Activated CD8-positive, alpha-beta memory T cell treated with anti-CD3 and anti-CD28 coated beads, Interleukin-2, amount 10 ng/mL, durations not matched to agents 7 days and 5 days (primary cell): ENCODE measurements at regions of chr17 and their contacts with region 1.

Region 1: DNA sequence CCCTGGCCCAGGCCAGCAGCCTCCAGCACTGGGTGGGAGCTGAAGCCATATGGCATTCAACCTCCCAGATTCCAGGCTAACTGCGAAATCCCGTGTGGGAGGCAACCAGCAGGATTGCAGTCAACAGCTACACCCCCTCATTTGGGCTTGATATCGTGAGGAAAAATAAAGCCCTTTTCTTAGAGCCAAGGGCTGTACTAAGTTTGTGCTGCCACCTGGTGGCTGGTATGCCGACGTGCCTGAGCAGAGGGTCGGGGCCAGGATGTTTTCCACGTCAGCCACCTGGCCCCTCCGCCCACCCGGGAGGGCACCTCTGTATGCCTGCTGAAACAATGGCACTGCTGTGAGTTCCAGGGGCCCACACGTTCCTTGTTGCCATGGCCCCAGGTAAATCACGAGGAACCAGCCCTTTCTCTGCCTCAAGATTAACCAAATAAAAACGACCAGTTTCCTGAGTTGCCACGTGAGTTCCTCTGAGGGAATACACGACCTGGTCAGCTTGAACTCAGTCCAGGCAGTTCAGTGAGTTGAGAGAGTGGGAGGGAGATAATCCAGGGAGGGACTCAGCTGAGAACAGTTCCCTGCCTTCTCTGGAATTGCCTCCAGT is 9.0 kb downstream of the TMEM98 start:
- DNase-seq: peak; percentile 72
- ATAC-seq: peak; percentile 86
- H3K4me3 Mint-ChIP-seq: peak overlapping the region; percentile 37
- H3K27ac Mint-ChIP-seq: no peak overlapping the region
- H3K4me1 Mint-ChIP-seq: peaks cover 7% of the 10 kb centered on the region
- H3K27me3 Mint-ChIP-seq: peaks cover 39% of the 10 kb centered on the region

Region 2: GRCh38 chr17:32742681-32743538 is 194.1 kb before region 1 on chr17:
- CTCF ChIA-PET with region 1: no interaction called
- DNase-seq: no peak
- ATAC-seq: no peak
- H3K4me3 Mint-ChIP-seq: no peak overlapping the region
- H3K27ac Mint-ChIP-seq: no peak overlapping the region
- H3K4me1 Mint-ChIP-seq: no peaks in the 10 kb centered on the region
- H3K27me3 Mint-ChIP-seq: no peaks in the 10 kb centered on the region

Region 3: DNA sequence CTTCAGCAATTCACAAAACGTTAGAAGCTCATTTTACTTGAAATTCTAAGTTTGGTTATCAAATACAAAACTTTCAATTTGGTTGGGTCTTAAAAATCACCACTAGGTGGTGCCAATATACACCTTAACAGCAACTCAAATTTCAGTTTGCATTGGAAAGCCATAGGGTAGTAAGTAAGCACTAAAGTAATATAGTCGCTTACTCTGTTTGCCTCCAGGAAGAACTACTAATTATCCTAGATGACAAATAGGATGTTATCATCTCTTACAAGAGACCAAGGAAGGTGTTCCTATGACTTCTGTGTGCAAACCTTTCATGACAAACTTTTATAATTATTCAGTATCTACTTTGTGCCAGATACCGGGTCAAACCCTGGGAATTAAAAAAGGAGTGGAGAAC is 153.4 kb before region 1 on chr17:
- CTCF ChIA-PET with region 1: interaction called, 36 read pairs
- DNase-seq: no peak
- ATAC-seq: peak; percentile 47
- H3K4me3 Mint-ChIP-seq: no peak overlapping the region
- H3K27ac Mint-ChIP-seq: no peak overlapping the region
- H3K4me1 Mint-ChIP-seq: peaks cover 2% of the 10 kb centered on the region
- H3K27me3 Mint-ChIP-seq: no peaks in the 10 kb centered on the region

Region 4: GRCh38 chr17:32909787-32910369 is 27.1 kb before region 1 on chr17:
- CTCF ChIA-PET with region 1: interaction called, 31 read pairs
- DNase-seq: peak; percentile 87
- ATAC-seq: peak; percentile 84
- H3K4me3 Mint-ChIP-seq: no peak overlapping the region
- H3K27ac Mint-ChIP-seq: peak overlapping the region; percentile 26
- H3K4me1 Mint-ChIP-seq: peaks cover 37% of the 10 kb centered on the region
- H3K27me3 Mint-ChIP-seq: peaks cover 7% of the 10 kb centered on the region

Region 5: DNA sequence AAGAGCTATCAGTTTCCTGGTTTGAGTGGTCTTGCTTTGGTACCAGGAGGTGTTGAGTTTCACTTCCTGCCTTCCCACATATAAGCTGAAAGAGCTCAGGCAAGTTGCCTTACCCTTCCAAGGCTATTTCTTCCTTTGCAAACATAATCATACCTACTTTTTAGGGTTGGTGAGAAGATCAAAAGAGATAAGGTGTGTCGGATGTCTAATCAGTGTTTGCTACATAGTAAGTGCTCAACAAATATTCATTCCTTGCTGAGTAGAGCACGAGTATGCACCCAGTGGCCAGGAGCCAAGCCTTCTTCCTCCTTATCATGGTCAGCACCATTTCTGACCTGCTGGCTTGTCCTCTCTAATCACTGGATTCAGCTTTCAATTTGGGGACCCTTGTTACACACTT is 21.8 kb before region 1 on chr17:
- CTCF ChIA-PET with region 1: interaction called, 31 read pairs
- DNase-seq: no peak
- ATAC-seq: no peak
- H3K4me3 Mint-ChIP-seq: peak overlapping the region; percentile 6
- H3K27ac Mint-ChIP-seq: peak overlapping the region; percentile 68
- H3K4me1 Mint-ChIP-seq: peaks cover 51% of the 10 kb centered on the region
- H3K27me3 Mint-ChIP-seq: peaks cover 2% of the 10 kb centered on the region

Region 6: GRCh38 chr17:32997753-32998632 is 61.0 kb after region 1 on chr17:
- CTCF ChIA-PET with region 1: interaction called, 14 read pairs
- DNase-seq: peak; percentile 81
- ATAC-seq: peak; percentile 81
- H3K4me3 Mint-ChIP-seq: no peak overlapping the region
- H3K27ac Mint-ChIP-seq: no peak overlapping the region
- H3K4me1 Mint-ChIP-seq: peaks cover 4% of the 10 kb centered on the region
- H3K27me3 Mint-ChIP-seq: peaks cover 30% of the 10 kb centered on the region

Region 7: GRCh38 chr17:33142705-33143299 is 205.8 kb after region 1 on chr17:
- CTCF ChIA-PET with region 1: no interaction called
- DNase-seq: peak; percentile 42
- ATAC-seq: no peak
- H3K4me3 Mint-ChIP-seq: no peak overlapping the region
- H3K27ac Mint-ChIP-seq: no peak overlapping the region
- H3K4me1 Mint-ChIP-seq: no peaks in the 10 kb centered on the region
- H3K27me3 Mint-ChIP-seq: no peaks in the 10 kb centered on the region

Region 8: DNA sequence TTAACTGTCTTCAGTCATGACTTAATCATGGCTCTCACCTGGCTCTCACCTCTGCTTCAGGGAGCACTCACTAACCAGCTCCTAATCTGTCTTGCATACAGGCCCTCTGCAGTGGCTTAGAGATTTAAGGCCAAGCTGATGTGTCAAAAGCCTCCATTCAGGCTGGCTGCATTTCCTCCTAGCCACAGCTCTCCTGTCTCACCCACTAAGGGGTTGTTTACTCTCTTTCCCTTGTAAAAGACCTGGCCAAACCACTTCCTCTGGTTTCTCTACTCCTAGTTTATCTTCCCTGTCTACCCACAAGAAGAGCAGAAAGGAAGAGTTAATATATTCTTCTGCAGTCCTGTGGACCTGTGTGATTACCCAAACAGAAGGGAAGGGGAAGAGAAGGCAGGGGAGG is 365.4 kb after region 1 on chr17:
- CTCF ChIA-PET with region 1: no interaction called
- DNase-seq: no peak
- ATAC-seq: no peak
- H3K4me3 Mint-ChIP-seq: no peak overlapping the region
- H3K27ac Mint-ChIP-seq: no peak overlapping the region
- H3K4me1 Mint-ChIP-seq: peaks cover 12% of the 10 kb centered on the region
- H3K27me3 Mint-ChIP-seq: peaks cover 21% of the 10 kb centered on the region